Transverse colon (tissue), 4 donors: ENCODE measurements at regions of chr16 and their contacts with region 1.

Region 1: GRCh38 chr16:83075956-83076355 is 449.2 kb downstream of the CDH13 start:
- DNase-seq: no peak
- H3K4me3 ChIP-seq: no peak overlapping the region
- H3K27ac ChIP-seq: no peak overlapping the region
- H3K4me1 ChIP-seq: no peaks in the 10 kb centered on the region
- H3K27me3 ChIP-seq: peaks cover 4% of the 10 kb centered on the region
- CTCF ChIP-seq: no peak
- EP300 ChIP-seq: no peak
- POLR2A ChIP-seq: no peak

Region 2: GRCh38 chr16:83051451-83051850 is 24.5 kb before region 1 on chr16:
- in situ Hi-C with region 1: no loop called
- intact Hi-C with region 1: loop called (anchors 1 kb)
- DNase-seq: no peak
- H3K4me3 ChIP-seq: no peak overlapping the region
- H3K27ac ChIP-seq: no peak overlapping the region
- H3K4me1 ChIP-seq: no peaks in the 10 kb centered on the region
- H3K27me3 ChIP-seq: no peaks in the 10 kb centered on the region
- CTCF ChIP-seq: no peak
- EP300 ChIP-seq: no peak
- POLR2A ChIP-seq: no peak

Region 3: GRCh38 chr16:83470416-83470815 is 394.5 kb after region 1 on chr16:
- in situ Hi-C with region 1: no loop called
- intact Hi-C with region 1: no loop called
- DNase-seq: no peak
- H3K4me3 ChIP-seq: no peak overlapping the region
- H3K27ac ChIP-seq: no peak overlapping the region
- H3K4me1 ChIP-seq: no peaks in the 10 kb centered on the region
- H3K27me3 ChIP-seq: no peaks in the 10 kb centered on the region
- CTCF ChIP-seq: no peak
- EP300 ChIP-seq: no peak
- POLR2A ChIP-seq: no peak